ENCODE measurements at regions of chr20 and their contacts with region 1.

Region 1: DNA sequence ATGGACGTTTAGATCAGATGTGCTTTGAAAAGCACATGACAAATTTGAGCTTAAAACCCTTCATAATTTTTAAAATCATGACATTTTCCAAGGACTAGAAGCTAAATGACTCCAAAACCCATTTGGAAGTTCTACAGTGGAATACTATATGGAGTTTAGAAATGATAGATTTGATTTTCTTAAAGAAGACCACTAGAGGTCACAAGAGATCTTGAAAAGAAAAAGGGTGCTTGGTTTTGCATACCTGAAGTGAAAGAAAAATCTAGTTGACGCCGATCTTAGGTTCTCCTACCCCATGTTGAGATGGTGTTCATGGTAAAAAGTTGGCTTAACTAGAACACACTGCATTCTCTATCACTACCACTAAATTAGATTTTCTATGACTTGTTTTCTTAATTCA is 31.5 kb downstream of the CFAP61 start:
- DNase-seq: no peak
- ATAC-seq: peak; percentile 20

Region 2: GRCh38 chr20:20138301-20139064 is 54.7 kb after region 1 on chr20:
- intact Hi-C with region 1: loop called (anchors 1 kb)
- DNase-seq: no peak
- ATAC-seq: peak; percentile 90

Region 3: GRCh38 chr20:20211274-20211987 is 127.6 kb after region 1 on chr20:
- intact Hi-C with region 1: loop called (anchors 2 kb)
- DNase-seq: no peak
- ATAC-seq: no peak

Region 4: GRCh38 chr20:20235681-20236080 is 151.9 kb after region 1 on chr20:
- intact Hi-C with region 1: loop called (anchors 1 kb)
- DNase-seq: no peak
- ATAC-seq: no peak

Region 5: DNA sequence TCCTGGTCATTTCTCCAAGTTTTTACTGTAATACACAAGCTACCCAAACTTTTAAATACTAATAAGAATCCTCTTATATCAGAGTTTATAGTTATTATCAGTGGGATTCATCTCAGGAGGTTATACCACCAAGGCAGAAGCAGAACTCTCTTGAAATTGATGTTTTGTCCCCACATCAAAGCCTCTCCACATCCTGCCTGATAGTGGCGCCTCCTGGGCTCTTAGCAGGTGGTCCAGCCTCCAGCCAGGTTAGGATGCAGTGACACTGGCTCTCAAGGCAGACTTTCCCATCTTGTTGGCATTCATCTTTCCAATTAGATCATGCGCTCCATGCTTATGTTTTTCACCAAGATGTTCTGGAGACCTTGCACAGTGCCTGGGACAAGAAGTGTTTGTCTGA is 202.3 kb after region 1 on chr20:
- intact Hi-C with region 1: no loop called
- DNase-seq: no peak
- ATAC-seq: no peak

Region 6: DNA sequence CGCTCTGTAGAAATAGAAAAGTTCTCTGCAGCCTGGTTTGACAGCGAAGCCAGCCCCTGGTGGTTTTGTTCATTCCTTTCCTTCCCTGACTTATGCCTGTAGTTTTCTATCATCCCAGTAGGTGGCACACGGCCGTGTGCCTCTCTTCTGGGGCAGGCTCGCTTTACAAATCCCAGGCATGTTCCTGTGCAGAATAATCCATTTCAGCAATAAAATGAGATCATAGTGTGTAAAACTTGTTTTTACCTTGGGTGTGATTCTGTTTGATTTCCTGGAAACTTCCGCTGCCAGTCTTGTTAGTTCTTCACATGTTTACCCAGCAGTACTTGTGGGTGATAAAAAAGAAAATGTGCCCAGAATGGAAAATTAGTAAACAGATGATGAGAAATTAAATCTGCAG is 276.7 kb after region 1 on chr20:
- intact Hi-C with region 1: loop called (anchors 5 kb)
- DNase-seq: no peak
- ATAC-seq: peak; percentile 76

Region 7: DNA sequence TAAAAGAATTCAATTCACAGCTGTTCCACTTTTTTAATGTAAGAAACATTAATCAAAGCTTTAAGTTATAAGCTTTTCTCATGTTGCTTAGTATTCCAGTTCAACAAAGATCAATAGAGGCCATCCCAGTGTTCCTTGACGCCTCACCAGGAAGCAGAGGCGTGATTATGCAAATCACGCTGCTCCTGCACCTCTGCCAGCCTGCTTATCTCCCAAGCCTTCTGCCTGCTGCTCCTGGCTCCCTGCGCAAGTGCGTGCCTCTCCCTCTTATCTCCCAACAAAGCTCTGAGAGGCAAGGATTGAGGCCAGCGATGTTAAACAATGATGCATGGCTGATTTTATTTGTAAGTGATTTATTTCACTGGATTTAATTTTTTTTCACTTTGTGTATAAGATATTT is 326.9 kb after region 1 on chr20:
- intact Hi-C with region 1: loop called (anchors 1 kb)
- DNase-seq: no peak
- ATAC-seq: peak; percentile 92

Region 8: GRCh38 chr20:20568604-20569205 is 484.9 kb after region 1 on chr20:
- intact Hi-C with region 1: loop called (anchors 5 kb)
- DNase-seq: no peak
- ATAC-seq: no peak